ENCODE measurements at regions of chr5 and their contacts with region 1.

Region 1: GRCh38 chr5:36669015-36669651 is 62.7 kb downstream of the SLC1A3 start:
- H3K4me3 ChIP-seq: no peak overlapping the region
- H3K27ac ChIP-seq: no peak overlapping the region
- H3K4me1 ChIP-seq: peaks cover 14% of the 10 kb centered on the region
- CTCF ChIP-seq: no peak

Region 2: GRCh38 chr5:36655161-36655560 is 14.0 kb before region 1 on chr5:
- CTCF ChIA-PET with region 1: interaction called, 5 read pairs
- POLR2A ChIA-PET with region 1: interaction called, 10 read pairs
- H3K4me3 ChIP-seq: no peak overlapping the region
- H3K27ac ChIP-seq: no peak overlapping the region
- H3K4me1 ChIP-seq: peaks cover 6% of the 10 kb centered on the region
- CTCF ChIP-seq: no peak

Measured in HEK293 (cell line).